IMR-90 (cell line): ENCODE measurements at regions of chr20 and their contacts with region 1.

Region 1: DNA sequence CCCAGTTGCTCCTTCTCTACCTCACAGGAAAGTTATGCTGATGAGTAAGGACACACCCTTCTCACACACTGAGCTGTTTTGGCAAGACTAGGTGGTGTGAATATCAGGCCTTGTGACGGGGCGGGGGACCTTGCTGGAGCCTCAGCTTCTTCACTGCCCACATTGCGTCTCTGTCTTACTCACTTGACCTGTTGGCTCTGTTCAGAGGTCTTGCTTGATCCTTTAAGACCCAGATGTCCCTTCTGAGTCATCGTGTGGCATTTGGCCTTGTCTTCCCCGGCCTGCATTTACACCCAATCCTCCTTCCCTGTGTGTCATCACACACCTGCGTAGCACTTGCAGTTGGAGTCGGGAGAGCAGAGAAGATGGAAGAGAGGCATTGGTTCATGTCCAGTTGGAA is 8.3 kb upstream of the PRND start:
- DNase-seq: no peak
- ATAC-seq: no peak
- H3K4me3 ChIP-seq: no peak overlapping the region
- H3K27ac ChIP-seq: no peak overlapping the region
- H3K4me1 ChIP-seq: no peaks in the 10 kb centered on the region
- H3K27me3 ChIP-seq: peaks cover 23% of the 10 kb centered on the region
- CTCF ChIP-seq: no peak
- POLR2A ChIP-seq: no peak
- RAD21 ChIP-seq: no peak

Region 2: DNA sequence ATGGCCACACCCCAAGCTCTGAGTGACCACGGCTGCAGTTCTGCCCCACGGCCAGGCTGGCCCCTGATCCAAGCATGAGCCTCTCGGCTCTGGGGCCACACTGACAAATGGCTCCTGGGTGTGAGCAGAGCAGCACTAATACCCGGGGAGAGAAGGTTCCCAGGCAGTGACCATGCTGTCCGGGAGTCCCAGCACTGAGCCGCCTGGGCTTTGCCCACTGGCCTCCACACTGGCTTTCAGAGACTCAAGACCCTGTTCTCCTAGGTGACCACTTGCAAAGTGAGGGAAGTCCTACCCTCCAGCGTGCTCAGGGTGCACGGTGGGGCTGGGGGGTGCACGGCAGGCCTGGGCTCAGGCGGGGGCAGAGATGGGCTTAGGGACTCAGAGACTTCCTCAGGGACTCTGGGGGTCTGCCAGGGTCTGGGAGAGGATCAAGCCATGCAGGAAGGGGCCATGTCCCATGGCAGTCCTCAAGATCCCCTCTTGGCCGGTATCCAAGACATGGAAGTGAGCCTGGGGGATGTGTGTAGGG is 477.8 kb before region 1 on chr20:
- CTCF ChIA-PET with region 1: no interaction called
- POLR2A ChIA-PET with region 1: no interaction called
- dilution Hi-C with region 1: no loop called
- in situ Hi-C with region 1: loop called (anchors 5 kb)
- intact Hi-C with region 1: no loop called
- DNase-seq: no peak
- ATAC-seq: no peak
- H3K4me3 ChIP-seq: no peak overlapping the region
- H3K27ac ChIP-seq: no peak overlapping the region
- H3K4me1 ChIP-seq: peaks cover 3% of the 10 kb centered on the region; the same call in 1 of the 2 replicates
- H3K27me3 ChIP-seq: no peaks in the 10 kb centered on the region
- CTCF ChIP-seq: no peak
- POLR2A ChIP-seq: no peak
- RAD21 ChIP-seq: no peak